Naive thymus-derived CD4-positive, alpha-beta T cell (primary cell): ENCODE measurements at regions of chr4 and their contacts with region 1.

Region 1: GRCh38 chr4:128809477-128810330 is at the start of gene JADE1:
- DNase-seq: peak; percentile 79 to 91 (median 89)
- ATAC-seq: peak; percentile 82
- H3K4me3 ChIP-seq: peak within 1 kb of the TSS; percentile 99
- H3K4me3 Mint-ChIP-seq: peak within 1 kb of the TSS; percentile 93 to 100 (median 97)
- H3K27ac ChIP-seq: peak within 1 kb of the TSS; percentile 93
- H3K27ac Mint-ChIP-seq: peak within 1 kb of the TSS; percentile 93 to 100 (median 96)
- H3K4me1 ChIP-seq: peaks cover 5 to 17% of the 10 kb centered on the region in 2 donors
- H3K4me1 Mint-ChIP-seq: peaks cover 12 to 28% (median 17%) of the 10 kb centered on the region in 7 donors
- H3K27me3 ChIP-seq: no peaks in the 10 kb centered on the region
- H3K27me3 Mint-ChIP-seq: no peaks in the 10 kb centered on the region
- total RNA-seq, gene JADE1: 35.4 to 79.5 (median 62.2) TPM

Region 2: DNA sequence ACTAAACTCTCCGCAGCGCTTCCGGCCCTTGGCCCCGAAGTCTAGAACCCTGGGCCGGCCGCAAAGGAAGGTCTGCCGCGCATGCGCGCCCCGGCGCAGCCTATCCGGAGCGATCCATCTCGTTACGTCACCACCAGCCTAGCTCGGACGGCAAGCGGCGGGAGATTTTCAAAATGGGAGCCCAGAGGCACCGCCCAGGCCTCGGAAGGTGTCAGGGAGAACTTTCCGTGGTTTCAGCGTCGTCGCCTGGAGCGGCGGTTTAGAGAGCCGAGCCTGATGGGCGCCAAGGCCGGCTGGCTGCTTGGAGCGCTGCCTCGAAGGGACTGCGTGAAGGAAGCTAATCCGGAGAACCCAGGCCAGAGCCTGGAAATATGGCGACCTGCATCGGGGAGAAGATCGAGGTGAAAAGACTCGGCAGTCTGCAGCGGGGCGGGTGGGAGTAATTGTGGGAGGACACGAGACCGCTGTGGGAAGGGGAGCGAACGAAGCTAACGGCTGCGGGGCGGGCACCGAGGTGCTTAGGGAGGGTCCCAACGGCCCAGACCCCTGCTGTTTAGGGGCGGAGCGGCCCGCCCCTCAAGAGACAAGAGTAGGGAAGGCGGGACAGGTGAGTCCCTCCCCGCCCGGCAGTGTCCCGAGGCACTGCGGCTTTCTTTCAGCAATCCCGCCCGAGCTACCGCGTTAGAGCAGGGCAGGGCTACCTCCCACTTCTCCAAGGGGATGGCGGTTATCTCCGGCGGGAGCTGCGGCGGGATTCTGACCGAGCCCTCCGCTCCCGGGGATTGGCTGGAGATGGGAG is 928.7 kb before region 1 on chr4 and contains the start of gene PLK4:
- CTCF ChIA-PET with region 1: interaction called, 3 read pairs
- POLR2A ChIA-PET with region 1: no interaction called
- intact Hi-C with region 1: loop called (anchors 1 to 2 kb)
- DNase-seq: peak; percentile 91 to 96 (median 95)
- ATAC-seq: peak; percentile 97
- H3K4me3 ChIP-seq: peak within 1 kb of the TSS; percentile 93
- H3K4me3 Mint-ChIP-seq: peak within 1 kb of the TSS; percentile 90 to 99 (median 97)
- H3K27ac ChIP-seq: peak within 1 kb of the TSS; percentile 75
- H3K27ac Mint-ChIP-seq: peak within 1 kb of the TSS; percentile 95 to 99 (median 99)
- H3K4me1 ChIP-seq: peaks cover 4 to 10% of the 10 kb centered on the region in 2 donors
- H3K4me1 Mint-ChIP-seq: peaks cover 4 to 37% (median 28%) of the 10 kb centered on the region in 7 donors
- H3K27me3 ChIP-seq: no peaks in the 10 kb centered on the region
- H3K27me3 Mint-ChIP-seq: peaks cover 0 to 3% (median 0%) of the 10 kb centered on the region in 5 donors
- total RNA-seq, gene PLK4: 3.4 to 34.7 (median 3.9) TPM

Region 3: DNA sequence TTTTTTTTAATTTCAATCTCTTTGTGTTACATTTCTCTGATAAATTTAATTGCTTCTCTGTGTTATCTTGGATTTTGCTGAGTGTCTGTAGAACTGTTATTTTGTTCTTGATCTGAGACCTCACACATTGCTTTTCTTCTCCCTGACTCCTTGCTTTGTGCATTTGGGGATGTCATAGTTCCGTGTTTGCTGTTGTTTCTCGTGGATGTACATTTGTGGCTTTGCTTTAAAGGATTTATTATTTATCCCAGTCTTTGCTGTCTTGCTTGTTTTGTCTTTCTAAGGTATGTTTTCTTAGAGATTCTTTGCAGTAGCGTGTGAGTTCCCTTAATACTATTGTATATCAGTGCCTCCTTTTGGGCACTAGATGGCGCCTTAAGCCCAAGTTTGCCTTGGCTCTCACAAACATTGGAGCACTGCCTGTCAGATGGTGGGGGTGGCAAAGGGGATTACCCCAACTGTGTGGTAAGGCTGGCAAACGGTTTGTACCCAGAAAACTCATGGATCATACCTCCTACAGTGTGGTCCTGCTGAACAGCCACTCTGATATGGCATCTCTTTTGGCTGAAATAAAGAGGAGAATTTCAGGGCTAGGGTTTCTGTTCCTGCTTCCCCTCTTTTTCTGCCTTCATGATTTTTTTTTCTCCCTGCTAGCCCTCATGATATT is 618.5 kb before region 1 on chr4:
- CTCF ChIA-PET with region 1: no interaction called
- POLR2A ChIA-PET with region 1: no interaction called
- intact Hi-C with region 1: loop called (anchors 1 kb)
- DNase-seq: peak; percentile 29 to 70 (median 61)
- ATAC-seq: peak; percentile 98
- H3K4me3 ChIP-seq: no peak overlapping the region
- H3K4me3 Mint-ChIP-seq: no peak overlapping the region
- H3K27ac ChIP-seq: no peak overlapping the region
- H3K27ac Mint-ChIP-seq: no peak overlapping the region
- H3K4me1 ChIP-seq: no peaks in the 10 kb centered on the region
- H3K4me1 Mint-ChIP-seq: peaks cover 2 to 11% (median 6%) of the 10 kb centered on the region in 7 donors
- H3K27me3 ChIP-seq: no peaks in the 10 kb centered on the region
- H3K27me3 Mint-ChIP-seq: no peaks in the 10 kb centered on the region

Region 4: DNA sequence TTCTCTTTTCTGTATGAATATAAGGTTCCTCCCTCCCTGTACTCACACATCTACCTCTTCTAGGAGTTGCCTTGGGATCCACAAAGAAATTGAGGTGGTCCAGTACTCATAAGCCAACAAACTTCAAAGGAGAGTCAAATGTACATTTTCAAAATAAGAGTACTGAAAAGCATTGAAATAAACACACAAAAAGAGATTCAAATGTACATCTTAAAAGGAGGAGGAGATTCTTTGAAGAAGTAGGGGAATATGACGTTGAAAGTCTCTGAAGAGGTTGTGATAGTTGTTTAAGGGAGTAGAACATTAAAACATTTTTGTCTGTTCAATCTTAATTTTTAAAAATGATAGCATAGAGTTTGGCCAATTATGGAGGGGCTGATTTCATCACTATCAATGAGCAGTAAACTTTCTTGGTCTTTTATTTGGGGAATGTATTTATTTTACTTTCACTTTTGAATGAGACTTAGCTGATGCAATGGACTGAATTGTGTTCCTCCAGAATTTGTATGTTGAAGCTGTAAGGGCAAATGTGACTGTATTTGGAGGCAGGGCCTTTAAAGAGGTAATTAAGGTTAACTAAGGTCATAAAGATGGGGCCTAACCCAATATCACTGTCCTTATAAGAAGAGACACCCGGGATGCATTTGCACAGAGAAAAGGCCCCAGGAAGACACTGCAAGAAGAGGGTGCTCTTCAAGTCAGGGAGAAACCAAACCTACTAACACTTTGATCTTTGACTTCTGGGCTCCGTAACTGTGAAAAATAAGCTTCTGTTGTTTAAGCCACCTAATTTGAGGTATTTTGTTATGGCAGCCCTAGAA is 295.8 kb before region 1 on chr4:
- CTCF ChIA-PET with region 1: no interaction called
- POLR2A ChIA-PET with region 1: no interaction called
- intact Hi-C with region 1: loop called in 1 of 2 experiments (anchors 2 kb)
- DNase-seq: peak in 6 of 9 donors; percentile 0 to 32 (median 20)
- ATAC-seq: peak; percentile 27
- H3K4me3 ChIP-seq: peak overlapping the region; percentile 13
- H3K4me3 Mint-ChIP-seq: peak overlapping the region; percentile 49 to 87 (median 80)
- H3K27ac ChIP-seq: peak overlapping the region; percentile 6
- H3K27ac Mint-ChIP-seq: peak overlapping the region; percentile 71 to 91 (median 82)
- H3K4me1 ChIP-seq: no peaks in the 10 kb centered on the region
- H3K4me1 Mint-ChIP-seq: peaks cover 9 to 24% (median 19%) of the 10 kb centered on the region in 7 donors
- H3K27me3 ChIP-seq: no peaks in the 10 kb centered on the region
- H3K27me3 Mint-ChIP-seq: no peaks in the 10 kb centered on the region

Region 5: GRCh38 chr4:128757712-128758111 is 52.0 kb before region 1 on chr4:
- CTCF ChIA-PET with region 1: no interaction called
- POLR2A ChIA-PET with region 1: no interaction called
- intact Hi-C with region 1: no loop called
- DNase-seq: no peak
- ATAC-seq: no peak
- H3K4me3 ChIP-seq: no peak overlapping the region
- H3K4me3 Mint-ChIP-seq: no peak overlapping the region
- H3K27ac ChIP-seq: no peak overlapping the region
- H3K27ac Mint-ChIP-seq: no peak overlapping the region
- H3K4me1 ChIP-seq: no peaks in the 10 kb centered on the region
- H3K4me1 Mint-ChIP-seq: peaks cover 0 to 7% (median 0%) of the 10 kb centered on the region in 7 donors
- H3K27me3 ChIP-seq: no peaks in the 10 kb centered on the region
- H3K27me3 Mint-ChIP-seq: peaks cover 0 to 3% (median 0%) of the 10 kb centered on the region in 5 donors

Region 6: DNA sequence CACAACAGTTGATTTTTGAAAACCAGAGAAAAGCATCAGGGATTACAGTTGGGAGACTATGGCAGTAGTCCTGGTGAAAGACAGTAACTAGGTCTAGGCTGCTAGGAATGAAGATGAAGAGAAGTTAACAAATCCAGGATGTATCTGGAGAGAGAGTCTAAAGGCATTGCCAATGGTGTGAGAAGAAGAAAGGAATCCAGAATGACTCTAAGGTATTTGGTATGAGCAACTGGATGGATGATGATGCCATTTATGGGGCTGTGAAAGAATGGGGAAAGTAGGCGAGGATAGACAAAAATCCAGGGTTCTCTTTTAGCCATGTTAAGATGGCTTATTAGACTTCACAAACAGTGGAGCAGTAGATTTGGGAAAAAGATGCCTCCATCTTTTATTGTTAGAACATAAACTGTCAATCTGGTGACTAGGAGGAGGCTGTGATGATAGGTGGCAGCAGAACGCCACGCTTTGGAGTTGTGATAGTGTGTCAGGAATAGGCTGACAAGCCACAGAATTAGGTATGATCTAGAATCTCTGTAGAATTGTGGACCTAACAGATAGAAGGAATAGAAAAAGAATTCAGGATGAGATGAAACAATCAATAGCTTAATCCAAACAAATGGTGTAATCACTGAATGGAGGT is 27.5 kb before region 1 on chr4:
- CTCF ChIA-PET with region 1: interaction called, 3 read pairs
- POLR2A ChIA-PET with region 1: no interaction called
- intact Hi-C with region 1: loop called (anchors 1 kb)
- DNase-seq: peak in 8 of 9 donors; percentile 11 to 66 (median 58)
- ATAC-seq: peak; percentile 77
- H3K4me3 ChIP-seq: no peak overlapping the region
- H3K4me3 Mint-ChIP-seq: no peak overlapping the region
- H3K27ac ChIP-seq: no peak overlapping the region
- H3K27ac Mint-ChIP-seq: no peak overlapping the region
- H3K4me1 ChIP-seq: no peaks in the 10 kb centered on the region
- H3K4me1 Mint-ChIP-seq: no peaks in the 10 kb centered on the region
- H3K27me3 ChIP-seq: no peaks in the 10 kb centered on the region
- H3K27me3 Mint-ChIP-seq: peaks cover 0 to 8% (median 4%) of the 10 kb centered on the region in 5 donors

Region 7: GRCh38 chr4:128863312-128864075 is 53.8 kb after region 1 on chr4:
- CTCF ChIA-PET with region 1: no interaction called
- POLR2A ChIA-PET with region 1: interaction called, 5 read pairs
- intact Hi-C with region 1: loop called (anchors 1 kb)
- DNase-seq: peak; percentile 37 to 74 (median 60)
- ATAC-seq: peak; percentile 73
- H3K4me3 ChIP-seq: no peak overlapping the region
- H3K4me3 Mint-ChIP-seq: peak overlapping the region in 5 of 10 donors; percentile 2 to 55 (median 17)
- H3K27ac ChIP-seq: peak overlapping the region; percentile 58
- H3K27ac Mint-ChIP-seq: peak overlapping the region in 8 of 9 donors; percentile 59 to 91 (median 82)
- H3K4me1 ChIP-seq: peaks cover 21 to 22% of the 10 kb centered on the region in 2 donors
- H3K4me1 Mint-ChIP-seq: peaks cover 20 to 49% (median 45%) of the 10 kb centered on the region in 7 donors
- H3K27me3 ChIP-seq: no peaks in the 10 kb centered on the region
- H3K27me3 Mint-ChIP-seq: no peaks in the 10 kb centered on the region

Region 8: GRCh38 chr4:129988957-129989356 is 1179.3 kb after region 1 on chr4:
- CTCF ChIA-PET with region 1: no interaction called
- POLR2A ChIA-PET with region 1: no interaction called
- intact Hi-C with region 1: no loop called
- DNase-seq: no peak
- ATAC-seq: no peak
- H3K4me3 ChIP-seq: no peak overlapping the region
- H3K4me3 Mint-ChIP-seq: no peak overlapping the region
- H3K27ac ChIP-seq: no peak overlapping the region
- H3K27ac Mint-ChIP-seq: no peak overlapping the region
- H3K4me1 ChIP-seq: no peaks in the 10 kb centered on the region
- H3K4me1 Mint-ChIP-seq: no peaks in the 10 kb centered on the region
- H3K27me3 ChIP-seq: no peaks in the 10 kb centered on the region
- H3K27me3 Mint-ChIP-seq: no peaks in the 10 kb centered on the region